T-cell (primary cell): ENCODE measurements at regions of chr1 and their contacts with region 1.

Region 1: GRCh38 chr1:2594001-2594640 is 7.5 kb downstream of the PRXL2B start:
- DNase-seq: no peak
- ATAC-seq: no peak
- H3K4me3 ChIP-seq: no peak overlapping the region
- H3K4me3 Mint-ChIP-seq: no peak overlapping the region
- H3K27ac ChIP-seq: no peak overlapping the region
- H3K27ac Mint-ChIP-seq: no peak overlapping the region
- H3K4me1 ChIP-seq: peaks cover 0 to 14% of the 10 kb centered on the region in 2 experiments
- H3K4me1 Mint-ChIP-seq: peaks cover 0 to 8% (median 0%) of the 10 kb centered on the region in 3 donors
- H3K27me3 ChIP-seq: peaks cover 0 to 41% of the 10 kb centered on the region in 2 experiments
- H3K27me3 Mint-ChIP-seq: peaks cover 0 to 5% of the 10 kb centered on the region in 2 donors

Region 2: GRCh38 chr1:2643414-2644077 is 49.4 kb after region 1 on chr1:
- CTCF ChIA-PET with region 1: no interaction called
- POLR2A ChIA-PET with region 1: interaction called in 1 of 2 experiments, 10 read pairs
- DNase-seq: peak in 2 of 35 experiments; percentile 4 to 12
- ATAC-seq: no peak
- H3K4me3 ChIP-seq: peak overlapping the region; percentile 27 to 70
- H3K4me3 Mint-ChIP-seq: peak overlapping the region; percentile 51 to 74 (median 59)
- H3K27ac ChIP-seq: no peak overlapping the region
- H3K27ac Mint-ChIP-seq: peak overlapping the region in 1 of 2 donors; percentile 31
- H3K4me1 ChIP-seq: peaks cover 2 to 25% of the 10 kb centered on the region in 2 experiments
- H3K4me1 Mint-ChIP-seq: peaks cover 6 to 16% (median 13%) of the 10 kb centered on the region in 3 donors
- H3K27me3 ChIP-seq: peaks cover 0 to 18% of the 10 kb centered on the region in 2 experiments
- H3K27me3 Mint-ChIP-seq: no peaks in the 10 kb centered on the region